ENCODE measurements at regions of chr10 and their contacts with region 1.

Region 1: DNA sequence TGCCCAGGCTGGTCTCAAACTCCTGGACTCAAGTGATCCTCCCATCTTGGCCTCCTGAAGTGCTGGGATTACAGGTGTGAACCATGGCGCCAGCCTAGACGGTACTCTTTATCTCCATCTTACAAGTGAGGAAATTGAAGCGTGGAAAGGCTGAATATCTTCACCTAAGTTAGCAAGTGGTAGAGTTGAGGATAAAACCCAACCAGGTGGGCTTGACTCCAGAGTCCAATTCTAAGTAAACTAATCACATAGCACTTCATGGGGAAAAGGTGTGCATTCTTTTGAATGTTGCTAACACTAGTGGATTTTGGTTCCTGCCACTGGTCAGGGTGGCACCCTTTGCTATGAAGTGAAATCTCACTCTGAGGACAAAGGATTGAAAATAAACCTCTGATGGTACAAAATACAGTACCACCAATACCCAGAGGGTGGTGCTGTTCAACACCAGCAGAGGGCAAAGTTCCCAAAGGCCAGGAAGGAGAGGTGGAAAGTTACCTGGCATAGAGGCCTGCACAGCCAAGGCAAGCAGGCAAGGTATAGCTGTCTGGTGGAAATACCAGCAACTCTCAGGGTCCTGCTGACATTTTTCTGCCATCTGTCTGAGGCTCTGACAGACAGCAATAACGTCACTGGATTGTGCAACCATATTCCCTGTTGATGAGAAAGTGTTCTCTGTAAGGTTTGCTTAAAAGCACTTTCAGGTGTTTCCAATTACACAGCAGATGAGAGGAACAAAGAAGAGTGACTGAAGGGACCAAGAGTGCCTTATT is 17.6 kb downstream of the ZDHHC16 start:
- DNase-seq: peak; percentile 69
- ATAC-seq: peak; percentile 67
- H3K4me3 ChIP-seq: no peak overlapping the region
- H3K27ac ChIP-seq: no peak overlapping the region
- H3K4me1 ChIP-seq: peaks cover 9% of the 10 kb centered on the region
- H3K27me3 ChIP-seq: no peaks in the 10 kb centered on the region
- CTCF ChIP-seq: peak; percentile 83
- POLR2A ChIP-seq: no peak
- RAD21 ChIP-seq: peak; percentile 77

Region 2: GRCh38 chr10:97553575-97554031 is 90.1 kb after region 1 on chr10:
- CTCF ChIA-PET with region 1: interaction called, 8 read pairs
- POLR2A ChIA-PET with region 1: no interaction called
- dilution Hi-C with region 1: no loop called
- in situ Hi-C with region 1: loop called (anchors 5 kb)
- intact Hi-C with region 1: loop called (anchors 1 kb)
- DNase-seq: peak; percentile 70
- ATAC-seq: peak; percentile 96
- H3K4me3 ChIP-seq: no peak overlapping the region
- H3K27ac ChIP-seq: peak overlapping the region; percentile 7; the same call in 1 of the 2 replicates
- H3K4me1 ChIP-seq: peaks cover 16% of the 10 kb centered on the region
- H3K27me3 ChIP-seq: no peaks in the 10 kb centered on the region
- CTCF ChIP-seq: peak; percentile 91
- POLR2A ChIP-seq: 0 out of 2 replicates have a peak, but pooled peaks have one; percentile 27
- RAD21 ChIP-seq: peak; percentile 96

Region 3: DNA sequence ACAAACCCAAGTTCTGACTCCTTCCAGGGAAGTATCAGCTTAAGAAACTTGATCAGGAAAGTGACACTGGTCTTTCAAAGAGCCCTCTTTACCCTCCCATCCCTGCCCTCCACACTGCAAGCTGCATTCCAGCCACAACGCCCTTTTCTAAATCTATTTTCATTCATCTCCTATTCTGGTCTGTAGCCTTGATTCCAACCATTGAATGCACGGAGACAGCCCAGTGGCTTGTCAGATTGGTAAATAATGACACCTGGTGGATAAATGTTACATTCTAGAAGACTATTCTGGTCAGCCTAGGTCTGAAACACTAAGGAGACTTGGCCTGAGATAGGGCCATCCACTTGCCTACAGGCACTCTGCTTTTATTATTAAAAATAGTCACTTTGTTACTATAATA is 148.8 kb after region 1 on chr10:
- CTCF ChIA-PET with region 1: no interaction called
- POLR2A ChIA-PET with region 1: no interaction called
- dilution Hi-C with region 1: no loop called
- in situ Hi-C with region 1: no loop called
- intact Hi-C with region 1: loop called (anchors 2 kb)
- DNase-seq: peak; percentile 55
- ATAC-seq: peak; percentile 80
- H3K4me3 ChIP-seq: no peak overlapping the region
- H3K27ac ChIP-seq: no peak overlapping the region
- H3K4me1 ChIP-seq: no peaks in the 10 kb centered on the region
- H3K27me3 ChIP-seq: no peaks in the 10 kb centered on the region
- CTCF ChIP-seq: peak; percentile 58
- POLR2A ChIP-seq: no peak
- RAD21 ChIP-seq: peak; percentile 75

Region 4: DNA sequence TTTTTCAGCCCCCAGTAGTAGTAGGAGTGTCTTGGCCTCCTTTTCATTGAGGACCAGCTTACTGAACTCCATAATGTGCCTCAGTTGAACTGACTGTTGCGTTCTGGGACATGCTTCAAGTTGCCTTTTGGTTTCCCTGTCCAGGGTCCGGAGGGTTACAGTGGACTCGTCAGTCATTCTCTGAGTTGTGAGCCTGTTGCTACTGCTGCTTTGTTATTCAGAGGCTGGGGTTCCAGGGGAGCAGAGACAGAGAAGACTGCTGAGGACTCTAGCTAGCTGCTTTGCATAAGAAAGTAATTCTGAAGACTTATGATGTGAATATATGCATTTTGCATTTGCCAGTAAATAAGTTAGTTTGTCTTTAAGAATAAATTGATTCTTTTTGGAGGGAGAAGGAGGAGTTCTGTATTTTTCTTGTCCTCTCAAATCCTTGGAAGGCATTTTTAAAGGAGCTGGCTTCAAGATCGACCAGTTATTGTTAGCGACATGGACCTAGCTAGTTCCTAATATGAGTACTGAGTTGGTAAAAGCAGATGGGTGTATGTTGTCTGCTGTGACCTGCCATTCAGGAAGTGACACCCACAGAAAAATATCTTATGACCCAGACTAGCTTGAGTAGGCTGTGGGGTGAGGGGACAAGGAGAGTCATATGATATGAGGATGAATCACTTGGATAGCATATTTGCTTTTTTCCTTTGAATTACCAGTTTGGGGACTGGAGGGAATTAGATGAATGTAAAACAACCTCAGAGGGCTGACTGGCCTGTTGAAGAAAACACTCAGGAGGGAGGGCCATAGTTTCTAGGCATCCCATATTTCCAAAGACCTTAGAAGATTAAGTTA is 185.2 kb after region 1 on chr10:
- CTCF ChIA-PET with region 1: no interaction called
- POLR2A ChIA-PET with region 1: no interaction called
- dilution Hi-C with region 1: no loop called
- in situ Hi-C with region 1: no loop called
- intact Hi-C with region 1: loop called (anchors 2 kb)
- DNase-seq: peak; percentile 96
- ATAC-seq: peak; percentile 92
- H3K4me3 ChIP-seq: no peak overlapping the region
- H3K27ac ChIP-seq: peak overlapping the region; percentile 99
- H3K4me1 ChIP-seq: peaks cover 19% of the 10 kb centered on the region
- H3K27me3 ChIP-seq: no peaks in the 10 kb centered on the region
- CTCF ChIP-seq: no peak
- POLR2A ChIP-seq: peak; percentile 66; the same call in 1 of the 2 replicates
- RAD21 ChIP-seq: no peak; the same call in 1 of the 2 replicates

Region 5: DNA sequence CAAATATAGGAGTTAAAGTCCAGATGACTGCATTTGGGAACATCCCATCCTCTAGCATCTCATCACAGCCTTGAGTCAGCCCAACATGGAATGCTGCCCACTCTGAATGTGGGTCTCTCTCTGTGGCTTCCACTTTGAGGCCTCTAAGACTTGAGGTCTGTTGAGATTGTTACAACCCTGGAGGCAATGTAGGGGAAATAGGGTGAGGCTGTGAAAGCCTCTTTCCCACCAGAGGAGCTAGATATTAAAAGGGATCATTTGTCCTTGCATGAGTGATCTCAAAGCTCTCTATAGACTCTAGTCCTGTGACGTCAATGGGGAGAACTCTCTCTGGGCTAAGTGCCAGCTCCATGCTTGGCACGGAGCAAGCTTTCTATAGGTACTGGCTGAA is 379.7 kb after region 1 on chr10:
- CTCF ChIA-PET with region 1: no interaction called
- POLR2A ChIA-PET with region 1: no interaction called
- dilution Hi-C with region 1: no loop called
- in situ Hi-C with region 1: no loop called
- intact Hi-C with region 1: no loop called
- DNase-seq: no peak
- ATAC-seq: no peak
- H3K4me3 ChIP-seq: no peak overlapping the region
- H3K27ac ChIP-seq: no peak overlapping the region
- H3K4me1 ChIP-seq: 0 out of 2 replicates have a peak, but pooled peaks cover 2% of the 10 kb centered on the region
- H3K27me3 ChIP-seq: peaks cover 7% of the 10 kb centered on the region
- CTCF ChIP-seq: no peak
- POLR2A ChIP-seq: no peak
- RAD21 ChIP-seq: no peak

Region 6: DNA sequence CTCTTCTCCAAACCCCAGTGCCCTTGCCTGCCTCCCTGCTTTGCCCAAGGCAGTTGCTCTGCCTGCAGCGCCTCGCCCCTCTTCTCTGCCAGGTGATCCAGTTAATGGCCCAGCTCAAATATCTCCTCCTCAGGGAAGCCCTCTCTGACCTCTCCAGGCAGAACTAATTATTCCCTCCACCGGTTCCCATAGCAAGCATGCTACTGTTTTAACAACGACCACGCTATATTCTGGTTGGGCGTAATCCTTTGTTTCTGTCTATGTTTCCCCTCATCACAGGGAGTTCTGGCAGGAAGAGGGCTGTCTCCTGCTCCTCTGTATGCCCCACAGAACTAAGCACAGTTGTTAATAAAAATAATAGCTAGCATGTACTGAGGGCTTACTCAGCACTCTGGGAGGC is 634.1 kb after region 1 on chr10:
- CTCF ChIA-PET with region 1: no interaction called
- POLR2A ChIA-PET with region 1: no interaction called
- dilution Hi-C with region 1: no loop called
- in situ Hi-C with region 1: no loop called
- intact Hi-C with region 1: no loop called
- DNase-seq: no peak
- ATAC-seq: no peak
- H3K4me3 ChIP-seq: no peak overlapping the region
- H3K27ac ChIP-seq: no peak overlapping the region
- H3K4me1 ChIP-seq: no peaks in the 10 kb centered on the region
- H3K27me3 ChIP-seq: peaks cover 2% of the 10 kb centered on the region; the same call in 1 of the 2 replicates
- CTCF ChIP-seq: no peak
- POLR2A ChIP-seq: no peak
- RAD21 ChIP-seq: no peak

Measured in IMR-90 (cell line).